Heart left ventricle (tissue), 16 donors: ENCODE measurements at regions of chr4 and their contacts with region 1.

Region 1: DNA sequence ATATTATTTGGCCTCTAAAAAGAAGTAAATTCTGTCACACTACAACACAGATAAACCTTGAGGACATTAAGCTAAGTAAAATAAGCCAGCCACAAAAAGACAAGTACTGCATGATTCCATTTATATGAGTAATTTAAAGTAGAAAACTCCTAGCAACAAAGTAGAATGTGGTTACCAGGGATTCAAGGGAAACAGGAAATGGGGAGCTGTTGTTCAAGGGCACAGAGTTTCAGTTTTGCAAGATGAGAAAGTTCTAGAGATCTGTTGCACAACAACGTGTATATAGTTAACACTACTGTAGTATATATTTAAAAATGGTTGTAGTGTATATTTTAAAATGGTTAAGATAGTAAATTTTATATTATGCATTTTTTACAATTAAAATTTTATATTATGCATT is 25.4 kb downstream of the SEC31A start:
- DNase-seq: no peak
- ATAC-seq: peak in 3 of 4 donors; percentile 34 to 41 (median 36)
- H3K4me3 ChIP-seq: no peak overlapping the region
- H3K27ac ChIP-seq: peak overlapping the region in 2 of 12 donors; percentile 19 to 43
- H3K4me1 ChIP-seq: peaks cover 0 to 28% (median 3%) of the 10 kb centered on the region in 12 donors
- H3K27me3 ChIP-seq: no peaks in the 10 kb centered on the region
- CTCF ChIP-seq: no peak
- POLR2A ChIP-seq: no peak

Region 2: DNA sequence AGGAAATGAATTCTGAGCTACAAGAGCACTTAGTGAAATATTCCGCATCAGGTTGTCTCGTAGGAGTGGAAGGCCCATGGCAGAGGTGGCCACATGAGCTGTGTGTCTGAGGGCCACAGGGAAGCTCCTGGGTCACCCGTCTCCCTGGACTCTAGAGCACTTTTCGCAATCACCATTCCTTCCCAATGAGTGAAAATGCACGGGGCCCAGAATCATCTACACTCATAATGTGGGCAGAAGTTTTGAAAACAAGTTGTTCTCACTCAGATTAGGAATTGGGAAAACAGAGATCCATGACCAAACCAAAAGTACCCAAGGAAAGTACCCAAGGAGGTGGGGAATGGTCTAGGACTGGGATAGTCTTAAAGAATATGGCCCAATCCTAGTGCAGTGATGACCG is 161.4 kb before region 1 on chr4:
- intact Hi-C with region 1: no loop called
- DNase-seq: no peak
- ATAC-seq: no peak
- H3K4me3 ChIP-seq: no peak overlapping the region
- H3K27ac ChIP-seq: no peak overlapping the region
- H3K4me1 ChIP-seq: peaks cover 0 to 10% (median 0%) of the 10 kb centered on the region in 12 donors
- H3K27me3 ChIP-seq: no peaks in the 10 kb centered on the region
- CTCF ChIP-seq: no peak
- POLR2A ChIP-seq: no peak

Region 3: DNA sequence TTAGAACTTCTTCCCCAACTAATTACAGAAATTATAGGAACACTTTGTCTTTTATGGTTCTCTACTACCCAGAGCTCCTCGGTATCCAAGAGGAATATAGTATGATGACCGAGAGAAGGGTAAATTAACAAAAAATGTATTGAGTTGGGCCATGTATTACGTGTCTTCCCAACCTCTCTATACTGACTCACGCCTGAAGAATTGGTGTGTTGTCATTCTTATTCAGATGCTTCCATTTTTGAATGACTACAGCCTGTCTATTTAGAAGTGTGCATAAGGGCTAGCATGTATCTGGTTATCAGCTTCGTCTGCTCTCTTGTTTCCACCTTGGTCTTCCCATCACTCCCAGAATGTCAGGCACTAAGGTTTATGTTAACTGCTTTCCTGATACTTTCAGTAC is 42.5 kb before region 1 on chr4:
- intact Hi-C with region 1: loop called in 3 of 10 experiments (anchors 5 to 10 kb)
- DNase-seq: no peak
- ATAC-seq: no peak
- H3K4me3 ChIP-seq: no peak overlapping the region
- H3K27ac ChIP-seq: no peak overlapping the region
- H3K4me1 ChIP-seq: no peaks in the 10 kb centered on the region
- H3K27me3 ChIP-seq: no peaks in the 10 kb centered on the region
- CTCF ChIP-seq: no peak
- POLR2A ChIP-seq: no peak

Region 4: DNA sequence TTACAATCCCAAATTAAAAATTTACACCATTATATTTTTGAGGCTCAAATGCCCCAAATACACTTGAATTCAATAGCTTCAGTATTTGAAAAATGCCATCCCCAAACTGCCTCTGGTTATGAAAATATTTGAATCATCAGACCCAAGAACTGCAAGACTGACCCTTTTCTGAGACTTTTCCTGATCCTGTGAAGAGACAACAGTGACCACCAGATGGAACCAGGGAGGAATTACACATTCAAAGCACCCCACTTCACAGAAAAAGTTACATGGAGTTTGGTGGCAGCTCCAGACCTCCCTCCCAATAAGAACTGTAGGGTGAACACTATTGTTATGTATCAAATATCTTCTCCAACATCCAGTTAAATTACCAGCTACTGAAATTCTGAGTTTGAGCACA is 23.0 kb before region 1 on chr4:
- intact Hi-C with region 1: loop called in 1 of 10 experiments (anchors 2 kb)
- DNase-seq: no peak
- ATAC-seq: no peak
- H3K4me3 ChIP-seq: no peak overlapping the region
- H3K27ac ChIP-seq: no peak overlapping the region
- H3K4me1 ChIP-seq: peaks cover 0 to 3% (median 0%) of the 10 kb centered on the region in 12 donors
- H3K27me3 ChIP-seq: no peaks in the 10 kb centered on the region
- CTCF ChIP-seq: peak in 1 of 12 donors; percentile 14
- POLR2A ChIP-seq: no peak

Region 5: DNA sequence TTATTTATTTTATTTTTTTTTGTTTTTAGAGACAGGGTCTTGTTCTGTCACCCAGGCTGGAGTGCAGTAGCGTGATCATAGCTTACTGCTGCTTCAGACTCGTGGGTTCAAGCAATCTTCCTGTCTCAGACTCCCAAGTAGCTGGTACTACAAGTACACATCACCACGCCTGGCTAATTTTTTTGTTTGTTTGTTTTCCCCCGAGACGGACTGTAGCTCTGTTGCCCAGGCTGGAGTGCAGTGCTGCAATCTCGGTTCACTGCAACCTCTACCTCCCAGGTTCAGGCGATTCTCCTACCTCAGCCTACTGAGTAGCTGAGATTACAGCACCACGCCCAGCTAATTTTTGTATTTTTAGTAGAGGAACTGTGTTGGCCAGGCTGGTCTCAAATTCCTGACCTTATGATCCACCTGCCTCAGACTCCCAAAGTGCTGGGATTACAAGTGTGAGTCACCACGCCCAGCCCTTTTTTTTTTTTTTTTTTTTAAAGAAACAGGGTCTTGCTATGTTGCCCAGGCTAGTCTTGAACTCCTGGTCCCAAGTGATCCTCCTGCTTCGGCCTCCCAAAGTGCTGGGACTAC is 201.6 kb after region 1 on chr4:
- intact Hi-C with region 1: loop called in 1 of 10 experiments (anchors 5 kb)
- DNase-seq: no peak
- ATAC-seq: no peak
- H3K4me3 ChIP-seq: no peak overlapping the region
- H3K27ac ChIP-seq: no peak overlapping the region
- H3K4me1 ChIP-seq: peaks cover 0 to 8% (median 0%) of the 10 kb centered on the region in 12 donors
- H3K27me3 ChIP-seq: no peaks in the 10 kb centered on the region
- CTCF ChIP-seq: no peak
- POLR2A ChIP-seq: no peak